ENCODE measurements at regions of chr18 and their contacts with region 1.

Region 1: GRCh38 chr18:46518438-46518837 is 138.6 kb downstream of the LOXHD1 start:
- DNase-seq: no peak
- H3K4me3 ChIP-seq: no peak overlapping the region
- CTCF ChIP-seq: no peak

Region 2: DNA sequence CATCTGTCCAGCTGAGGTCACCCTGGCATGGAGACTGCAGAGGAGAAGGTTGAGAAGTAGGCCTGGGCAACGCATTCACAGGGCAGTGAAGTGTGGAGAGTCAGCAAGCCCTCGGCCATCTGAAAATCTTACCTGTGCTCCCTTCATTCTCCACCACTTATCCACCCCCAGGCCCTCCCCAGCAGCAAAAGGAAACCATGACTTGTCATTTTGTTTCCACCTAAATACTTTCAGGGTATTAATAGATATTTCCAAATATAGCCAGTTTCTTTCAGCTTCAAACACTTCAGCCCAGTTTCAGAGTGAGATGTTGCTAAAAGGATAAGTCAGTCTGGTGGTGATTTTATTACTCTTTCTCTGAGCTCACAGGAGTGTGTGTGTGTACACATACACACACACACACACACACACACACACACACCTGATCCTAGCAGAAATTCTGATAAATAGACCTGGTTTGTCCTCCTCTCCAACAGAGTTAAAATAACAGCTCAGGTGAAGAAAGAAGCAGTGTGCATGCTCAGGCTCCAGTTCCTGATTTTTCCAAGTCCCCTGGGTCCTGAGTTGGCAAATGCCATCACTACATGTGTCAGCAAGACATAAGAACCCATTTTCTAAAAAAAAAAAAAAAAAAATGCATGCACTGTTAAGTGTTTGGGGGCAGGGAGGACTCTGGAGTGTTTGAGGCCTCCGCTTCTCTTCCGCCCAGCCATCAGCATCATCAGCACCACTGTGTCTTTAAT is 55.7 kb after region 1 on chr18:
- in situ Hi-C with region 1: loop called (anchors 5 kb)
- DNase-seq: no peak
- H3K4me3 ChIP-seq: no peak overlapping the region
- CTCF ChIP-seq: no peak

Region 3: DNA sequence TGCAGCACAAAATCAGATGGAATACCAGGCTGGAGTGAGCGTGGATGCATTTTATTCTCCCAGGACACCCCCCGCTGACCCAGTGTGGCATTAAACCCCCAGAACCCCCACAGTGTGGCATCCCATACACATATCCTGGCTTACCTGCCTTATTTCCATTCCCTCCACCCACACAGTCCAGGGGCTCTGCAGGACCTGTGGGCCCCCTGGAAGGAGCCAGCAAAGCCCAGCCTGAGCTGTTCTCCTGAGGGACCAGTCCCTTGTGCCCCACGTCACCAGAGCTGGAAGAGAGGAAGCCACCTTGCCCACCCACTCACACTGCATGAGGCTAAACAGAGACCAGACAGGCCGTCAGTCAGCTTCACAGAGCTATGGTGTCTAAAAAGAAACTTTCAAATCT is 218.3 kb after region 1 on chr18:
- in situ Hi-C with region 1: no loop called
- DNase-seq: no peak
- H3K4me3 ChIP-seq: no peak overlapping the region
- CTCF ChIP-seq: no peak

Measured in astrocyte of the cerebellum (primary cell).